Left ventricle myocardium inferior (tissue), 1 donor: ENCODE measurements at regions of chr15 and their contacts with region 1.

Region 1: DNA sequence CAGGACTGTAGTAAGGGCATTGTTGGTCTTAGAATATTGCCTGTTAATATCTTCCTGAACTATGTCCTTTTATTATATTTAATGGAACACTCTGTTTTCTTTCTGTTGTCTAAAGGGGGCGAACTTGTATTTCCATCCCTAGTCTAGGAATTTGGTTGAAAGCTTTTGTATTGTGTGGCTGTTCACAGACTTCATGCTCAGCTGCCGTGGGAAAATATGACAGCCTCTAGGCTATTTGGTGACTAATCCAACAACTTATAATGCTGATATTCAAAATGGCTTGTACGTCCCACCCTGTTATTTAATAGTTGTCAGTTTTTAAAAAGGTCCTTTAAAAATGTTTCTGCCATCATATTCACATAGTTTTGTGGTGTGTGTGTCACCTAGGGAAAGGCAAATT is 202.6 kb downstream of the KLHL25 start:
- DNase-seq: no peak
- H3K4me3 ChIP-seq: no peak overlapping the region
- H3K27ac ChIP-seq: peak overlapping the region; percentile 93
- H3K4me1 ChIP-seq: peaks cover 100% of the 10 kb centered on the region
- H3K27me3 ChIP-seq: no peaks in the 10 kb centered on the region
- CTCF ChIP-seq: peak; percentile 41

Region 2: DNA sequence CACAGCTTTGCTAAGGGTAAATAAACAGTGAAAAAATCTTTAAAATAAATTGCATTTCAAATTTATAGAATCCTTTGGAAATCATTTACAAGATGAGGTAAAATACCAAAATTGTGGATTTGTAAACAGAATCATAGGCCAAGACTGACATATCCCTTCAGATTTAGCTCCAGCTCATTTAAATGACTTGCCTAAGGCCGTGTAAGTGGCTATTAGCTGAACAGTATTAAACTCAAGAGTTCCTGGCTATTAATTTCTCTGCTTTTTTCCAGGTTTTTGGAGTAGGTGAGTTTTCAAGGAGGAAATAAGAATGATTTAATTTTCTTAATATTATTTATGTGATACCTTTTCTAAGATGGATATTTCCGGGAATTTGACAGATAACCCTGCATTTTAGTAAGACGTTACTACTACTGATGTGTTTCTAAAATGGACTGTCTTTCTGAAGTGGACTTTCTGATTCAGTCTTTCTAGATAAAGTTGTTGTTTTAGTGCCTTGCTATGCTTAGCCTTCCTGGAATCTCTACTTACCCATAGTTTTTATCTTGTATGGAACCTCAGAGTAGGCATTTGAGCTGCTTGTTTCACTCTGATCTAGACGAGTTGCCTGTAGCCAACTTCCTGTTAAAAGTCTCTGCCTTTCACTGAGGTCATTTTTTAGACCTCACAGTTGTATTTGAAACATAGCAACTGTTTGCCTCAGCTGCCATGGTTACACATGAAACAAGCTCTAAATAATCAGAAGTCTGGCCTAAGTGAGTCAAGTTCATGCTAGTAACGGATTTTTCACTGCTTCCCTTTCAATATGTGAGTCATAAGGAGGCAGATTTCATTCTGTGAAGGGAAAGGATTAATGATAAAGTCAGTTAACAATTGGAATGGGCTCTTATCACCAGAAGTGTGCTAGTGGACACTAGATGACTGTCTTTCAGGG is 75.6 kb after region 1 on chr15:
- intact Hi-C with region 1: no loop called
- DNase-seq: no peak
- H3K4me3 ChIP-seq: peak overlapping the region; percentile 4
- H3K27ac ChIP-seq: peak overlapping the region; percentile 84
- H3K4me1 ChIP-seq: peaks cover 66% of the 10 kb centered on the region
- H3K27me3 ChIP-seq: no peaks in the 10 kb centered on the region
- CTCF ChIP-seq: no peak

Region 3: GRCh38 chr15:85702321-85703101 is 110.4 kb after region 1 on chr15:
- intact Hi-C with region 1: no loop called
- DNase-seq: no peak
- H3K4me3 ChIP-seq: no peak overlapping the region
- H3K27ac ChIP-seq: peak overlapping the region; percentile 94
- H3K4me1 ChIP-seq: peaks cover 84% of the 10 kb centered on the region
- H3K27me3 ChIP-seq: no peaks in the 10 kb centered on the region
- CTCF ChIP-seq: no peak

Region 4: DNA sequence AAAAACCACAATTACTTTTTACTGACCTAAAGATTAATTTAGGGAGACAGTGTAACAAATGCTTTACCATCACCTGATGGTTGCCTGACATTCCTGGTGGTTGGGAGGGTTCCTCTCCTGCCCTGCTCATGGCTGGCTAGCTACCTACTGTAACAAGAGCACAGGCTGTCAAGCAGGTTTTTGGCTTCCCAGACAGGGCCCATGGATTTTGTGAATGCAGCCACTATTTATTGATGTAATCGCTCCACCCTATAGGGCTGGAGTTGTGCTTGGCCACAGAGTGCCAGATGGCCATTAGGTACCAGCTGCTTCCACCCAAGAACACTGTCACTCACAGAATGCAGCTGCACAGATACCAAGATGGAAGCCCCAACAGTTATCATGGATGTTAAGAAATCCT is 233.5 kb after region 1 on chr15:
- intact Hi-C with region 1: loop called (anchors 5 kb)
- DNase-seq: no peak
- H3K4me3 ChIP-seq: no peak overlapping the region
- H3K27ac ChIP-seq: no peak overlapping the region
- H3K4me1 ChIP-seq: no peaks in the 10 kb centered on the region
- H3K27me3 ChIP-seq: no peaks in the 10 kb centered on the region
- CTCF ChIP-seq: no peak